Left cardiac atrium (tissue), 4 donors: ENCODE measurements at regions of chr16 and their contacts with region 1.

Region 1: DNA sequence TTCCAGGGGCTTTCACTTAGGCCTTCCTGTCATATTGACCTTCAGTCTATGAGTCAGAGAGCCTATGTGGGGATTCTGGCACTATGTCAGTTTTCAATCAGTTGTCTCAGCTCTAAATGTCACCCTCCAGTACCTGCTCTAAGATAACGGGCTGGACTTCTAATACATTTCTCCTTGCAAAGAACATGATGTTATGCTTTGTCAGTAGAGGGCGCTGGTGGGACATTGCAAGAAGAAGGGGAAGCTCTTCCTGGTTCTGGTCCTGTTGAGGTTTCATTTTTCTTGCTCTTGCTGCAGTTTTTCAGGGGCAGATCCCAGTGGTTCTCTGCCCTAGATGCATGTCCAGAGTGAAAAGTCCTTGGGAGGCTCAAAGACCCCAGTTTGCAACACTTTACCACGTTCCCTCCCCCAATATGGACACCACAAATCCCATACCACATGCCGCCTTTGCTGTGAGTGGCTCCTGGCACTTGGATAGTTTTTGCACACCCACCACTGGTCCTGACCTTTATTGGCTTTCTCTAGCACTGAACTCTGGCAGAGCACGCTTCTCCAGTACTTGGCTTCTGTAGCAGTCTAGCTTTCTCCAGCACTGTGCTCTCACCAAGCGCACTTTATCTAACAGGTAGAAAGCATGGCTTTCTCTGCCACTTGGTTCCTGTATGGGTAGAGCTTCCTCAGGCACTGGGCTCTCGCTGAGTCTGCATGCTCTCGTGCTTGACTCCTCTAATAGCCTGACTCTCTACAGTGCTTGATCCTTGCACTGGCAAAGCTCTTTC is 49.0 kb downstream of the BCL7C start:
- DNase-seq: peak; percentile 73
- ATAC-seq: peak; percentile 89

Region 2: GRCh38 chr16:30122604-30123160 is 722.2 kb before region 1 on chr16:
- intact Hi-C with region 1: no loop called
- DNase-seq: no peak
- ATAC-seq: peak; percentile 24

Region 3: DNA sequence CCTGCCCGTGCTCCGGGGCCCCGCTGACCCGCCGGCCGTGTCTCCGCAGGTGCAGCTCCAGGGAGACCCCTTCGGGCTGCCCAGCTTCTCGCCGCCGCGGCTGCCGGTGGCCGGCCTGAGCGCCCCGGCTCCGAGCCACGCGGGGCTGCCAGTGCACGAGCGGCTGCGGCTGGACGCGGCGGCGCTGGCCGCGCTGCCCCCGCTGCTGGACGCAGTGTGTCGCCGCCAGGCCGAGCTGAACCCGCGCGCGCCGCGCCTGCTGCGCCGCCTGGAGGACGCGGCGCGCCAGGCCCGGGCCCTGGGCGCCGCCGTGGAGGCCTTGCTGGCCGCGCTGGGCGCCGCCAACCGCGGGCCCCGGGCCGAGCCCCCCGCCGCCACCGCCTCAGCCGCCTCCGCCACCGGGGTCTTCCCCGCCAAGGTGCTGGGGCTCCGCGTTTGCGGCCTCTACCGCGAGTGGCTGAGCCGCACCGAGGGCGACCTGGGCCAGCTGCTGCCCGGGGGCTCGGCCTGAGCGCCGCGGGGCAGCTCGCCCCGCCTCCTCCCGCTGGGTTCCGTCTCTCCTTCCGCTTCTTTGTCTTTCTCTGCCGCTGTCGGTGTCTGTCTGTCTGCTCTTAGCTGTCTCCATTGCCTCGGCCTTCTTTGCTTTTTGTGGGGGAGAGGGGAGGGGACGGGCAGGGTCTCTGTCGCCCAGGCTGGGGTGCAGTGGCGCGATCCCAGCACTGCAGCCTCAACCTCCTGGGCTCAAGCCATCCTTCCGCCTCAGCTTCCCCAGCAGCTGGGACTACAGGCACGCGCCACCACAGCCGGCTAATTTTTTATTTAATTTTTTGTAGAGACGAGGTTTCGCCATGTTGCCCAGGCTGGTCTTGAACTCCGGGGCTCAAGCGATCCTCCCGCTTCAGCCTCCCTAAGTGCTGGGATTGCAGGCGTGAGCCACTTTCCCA is 57.4 kb after region 1 on chr16:
- intact Hi-C with region 1: loop called in 1 of 2 experiments (anchors 2 kb)
- DNase-seq: peak; percentile 79
- ATAC-seq: peak; percentile 88 to 95

Region 4: DNA sequence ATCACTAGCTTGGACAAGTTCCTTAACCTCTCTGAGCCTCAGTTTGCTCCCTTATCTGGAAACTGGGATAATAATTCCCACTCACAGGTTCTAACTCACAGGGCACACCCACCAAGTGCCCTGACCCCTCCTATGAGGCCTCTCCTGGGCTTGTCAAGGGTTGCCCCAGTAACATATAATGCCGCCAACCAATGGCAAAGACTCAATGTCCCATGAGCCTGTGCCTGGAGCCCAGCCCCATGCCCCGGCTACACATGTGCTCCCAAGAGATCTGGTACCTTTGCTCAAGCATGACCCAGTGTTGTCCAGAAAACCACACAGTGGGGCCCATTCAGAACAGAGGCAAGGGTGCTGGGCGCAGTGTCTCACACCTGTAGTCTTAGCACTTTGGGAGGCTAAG is 70.0 kb after region 1 on chr16:
- intact Hi-C with region 1: loop called in 1 of 2 experiments (anchors 5 kb)
- DNase-seq: no peak
- ATAC-seq: no peak

Region 5: DNA sequence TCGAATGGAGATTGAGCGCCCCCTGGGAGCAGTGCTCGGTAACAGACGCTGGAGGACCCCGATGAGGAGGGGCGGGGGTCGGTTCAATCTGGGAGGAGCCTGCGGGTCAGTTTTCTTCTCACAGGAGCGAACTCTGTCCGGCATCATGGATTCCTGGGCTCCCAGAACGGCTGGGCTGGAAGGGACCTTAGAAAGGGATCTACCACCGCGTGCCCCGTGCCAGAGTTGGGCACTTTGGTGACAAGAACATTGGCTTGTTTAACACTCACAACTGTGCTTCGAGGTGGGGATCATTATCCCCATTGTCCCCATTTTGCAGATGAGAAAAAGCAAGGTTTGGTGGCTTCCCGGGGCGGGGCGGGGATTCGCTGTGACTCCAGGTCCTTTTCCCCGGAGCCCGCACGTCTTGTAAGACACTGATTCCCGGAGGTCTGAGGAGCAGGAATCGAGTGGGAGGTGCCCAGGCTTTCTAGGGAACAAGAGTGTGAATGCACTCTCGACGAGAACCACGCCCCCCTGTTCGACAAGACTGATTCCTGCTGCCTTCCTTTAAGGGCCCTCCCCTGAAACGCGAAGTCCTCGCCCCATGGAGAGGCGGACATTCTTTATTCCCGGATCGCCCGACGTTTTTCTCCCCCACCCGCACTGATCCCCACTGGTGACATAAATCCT is 77.0 kb after region 1 on chr16:
- intact Hi-C with region 1: loop called (anchors 1 to 5 kb)
- DNase-seq: peak; percentile 89
- ATAC-seq: peak; percentile 25 to 29